Mammary epithelial cell (primary cell): ENCODE measurements at regions of chr12 and their contacts with region 1.

Region 1: GRCh38 chr12:51424662-51425438 is at the start of gene SLC4A8:
- DNase-seq: peak; percentile 52
- H3K4me3 ChIP-seq: peak within 1 kb of the TSS; percentile 47 to 56 (median 54)
- H3K27ac ChIP-seq: no peak within 1 kb of the TSS
- H3K4me1 ChIP-seq: peaks cover 5% of the 10 kb centered on the region
- H3K27me3 ChIP-seq: no peaks in the 10 kb centered on the region
- CTCF ChIP-seq: peak; percentile 55 to 82
- total RNA-seq, gene SLC4A8: 0.07 to 0.50 TPM

Region 2: DNA sequence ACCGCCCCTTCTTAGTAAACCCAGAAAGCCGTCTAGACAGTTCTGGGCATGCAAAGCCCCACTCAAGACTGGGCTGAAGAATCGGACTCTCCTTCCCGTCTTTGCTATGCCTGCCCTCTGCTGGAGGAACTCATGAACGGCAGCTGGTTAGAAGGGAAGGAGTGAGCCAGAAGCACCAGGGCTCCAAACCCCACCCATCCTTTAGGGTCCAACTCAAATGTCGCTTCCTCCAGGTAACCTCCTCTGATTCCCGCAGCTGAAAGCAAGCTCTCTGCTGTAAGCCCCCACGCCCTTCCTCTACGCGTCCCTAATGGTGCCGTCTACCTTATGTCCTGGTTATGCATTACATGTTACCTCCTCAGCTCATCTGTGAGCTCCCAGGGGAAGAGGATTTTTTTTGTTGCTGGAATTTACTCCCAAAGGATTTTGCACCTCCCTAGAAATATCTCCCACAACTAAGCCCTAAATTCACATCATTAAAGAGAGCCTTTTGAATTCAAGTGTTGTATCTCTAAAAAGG is 107.2 kb after region 1 on chr12:
- CTCF ChIA-PET with region 1: no interaction called
- dilution Hi-C with region 1: no loop called
- in situ Hi-C with region 1: loop called (anchors 10 kb)
- intact Hi-C with region 1: loop called (anchors 1 kb)
- DNase-seq: peak; percentile 57
- H3K4me3 ChIP-seq: no peak overlapping the region
- H3K27ac ChIP-seq: no peak overlapping the region
- H3K4me1 ChIP-seq: no peaks in the 10 kb centered on the region
- H3K27me3 ChIP-seq: no peaks in the 10 kb centered on the region
- CTCF ChIP-seq: peak; percentile 81 to 93

Region 3: GRCh38 chr12:51666696-51667095 is 241.8 kb after region 1 on chr12:
- CTCF ChIA-PET with region 1: no interaction called
- dilution Hi-C with region 1: no loop called
- in situ Hi-C with region 1: no loop called
- intact Hi-C with region 1: no loop called
- DNase-seq: no peak
- H3K4me3 ChIP-seq: no peak overlapping the region
- H3K27ac ChIP-seq: no peak overlapping the region
- H3K4me1 ChIP-seq: peaks cover 14% of the 10 kb centered on the region
- H3K27me3 ChIP-seq: no peaks in the 10 kb centered on the region
- CTCF ChIP-seq: no peak

Region 4: GRCh38 chr12:51814311-51815088 is 389.6 kb after region 1 on chr12:
- CTCF ChIA-PET with region 1: no interaction called
- dilution Hi-C with region 1: no loop called
- in situ Hi-C with region 1: no loop called
- intact Hi-C with region 1: loop called (anchors 1 kb)
- DNase-seq: peak; percentile 18
- H3K4me3 ChIP-seq: peak overlapping the region in 2 of 3 experiments; percentile 40 to 43
- H3K27ac ChIP-seq: no peak overlapping the region
- H3K4me1 ChIP-seq: peaks cover 4% of the 10 kb centered on the region
- H3K27me3 ChIP-seq: peaks cover 2% of the 10 kb centered on the region
- CTCF ChIP-seq: peak; percentile 44 to 68

Region 5: GRCh38 chr12:51871126-51871525 is 446.3 kb after region 1 on chr12:
- CTCF ChIA-PET with region 1: no interaction called
- dilution Hi-C with region 1: no loop called
- in situ Hi-C with region 1: no loop called
- intact Hi-C with region 1: loop called (anchors 1 kb)
- DNase-seq: no peak
- H3K4me3 ChIP-seq: no peak overlapping the region
- H3K27ac ChIP-seq: no peak overlapping the region
- H3K4me1 ChIP-seq: peaks cover 7% of the 10 kb centered on the region
- H3K27me3 ChIP-seq: peaks cover 21% of the 10 kb centered on the region
- CTCF ChIP-seq: no peak

Region 6: GRCh38 chr12:51980051-51980808 is 555.4 kb after region 1 on chr12:
- CTCF ChIA-PET with region 1: no interaction called
- dilution Hi-C with region 1: no loop called
- in situ Hi-C with region 1: no loop called
- intact Hi-C with region 1: loop called (anchors 2 kb)
- DNase-seq: peak; percentile 44
- H3K4me3 ChIP-seq: no peak overlapping the region
- H3K27ac ChIP-seq: no peak overlapping the region
- H3K4me1 ChIP-seq: no peaks in the 10 kb centered on the region
- H3K27me3 ChIP-seq: no peaks in the 10 kb centered on the region
- CTCF ChIP-seq: peak; percentile 93 to 95